IMR-90 (cell line): ENCODE measurements at regions of chr5 and their contacts with region 1.

Region 1: GRCh38 chr5:122286541-122286940 is 25.5 kb upstream of the SNCAIP start:
- DNase-seq: no peak
- ATAC-seq: no peak
- H3K4me3 ChIP-seq: no peak overlapping the region
- H3K27ac ChIP-seq: no peak overlapping the region
- H3K4me1 ChIP-seq: peaks cover 5% of the 10 kb centered on the region; the same call in 1 of the 2 replicates
- H3K27me3 ChIP-seq: no peaks in the 10 kb centered on the region
- CTCF ChIP-seq: no peak
- POLR2A ChIP-seq: no peak
- RAD21 ChIP-seq: no peak

Region 2: DNA sequence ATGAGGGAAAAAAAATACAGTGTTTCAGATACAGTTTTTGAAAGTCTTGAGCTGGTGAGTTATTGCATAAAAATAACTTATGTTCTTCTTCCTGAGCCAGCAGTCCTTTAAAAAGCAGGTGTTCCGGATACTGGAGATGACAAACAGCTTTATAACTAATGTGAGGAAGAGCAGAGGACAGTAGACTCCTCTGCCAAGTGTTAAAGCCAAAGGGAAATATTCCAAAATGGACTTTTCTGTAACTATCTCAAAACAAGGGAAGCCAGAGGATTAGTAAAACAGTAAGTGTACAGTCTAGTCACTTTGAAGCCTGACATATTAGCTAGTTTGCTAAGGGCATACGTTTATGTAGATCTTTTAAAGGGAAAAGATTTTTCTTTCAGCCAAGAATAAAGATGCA is 14.5 kb after region 1 on chr5:
- CTCF ChIA-PET with region 1: interaction called, 4 read pairs
- POLR2A ChIA-PET with region 1: no interaction called
- dilution Hi-C with region 1: no loop called
- in situ Hi-C with region 1: no loop called
- intact Hi-C with region 1: loop called (anchors 1 kb)
- DNase-seq: no peak
- ATAC-seq: no peak
- H3K4me3 ChIP-seq: no peak overlapping the region
- H3K27ac ChIP-seq: no peak overlapping the region
- H3K4me1 ChIP-seq: no peaks in the 10 kb centered on the region
- H3K27me3 ChIP-seq: no peaks in the 10 kb centered on the region; the same call in 1 of the 2 replicates
- CTCF ChIP-seq: no peak
- POLR2A ChIP-seq: no peak
- RAD21 ChIP-seq: no peak

Region 3: GRCh38 chr5:122586351-122586750 is 299.8 kb after region 1 on chr5:
- CTCF ChIA-PET with region 1: no interaction called
- POLR2A ChIA-PET with region 1: no interaction called
- dilution Hi-C with region 1: no loop called
- in situ Hi-C with region 1: no loop called
- intact Hi-C with region 1: no loop called
- DNase-seq: peak; percentile 74
- ATAC-seq: peak; percentile 90
- H3K4me3 ChIP-seq: no peak overlapping the region
- H3K27ac ChIP-seq: no peak overlapping the region
- H3K4me1 ChIP-seq: peaks cover 6% of the 10 kb centered on the region
- H3K27me3 ChIP-seq: peaks cover 2% of the 10 kb centered on the region
- CTCF ChIP-seq: no peak
- POLR2A ChIP-seq: no peak
- RAD21 ChIP-seq: no peak